HepG2 (cell line): ENCODE measurements at regions of chr15 and their contacts with region 1.

Region 1: GRCh38 chr15:60660290-60661051 is 181.5 kb upstream of the ICE2 start:
- DNase-seq: no peak
- ATAC-seq: no peak
- H3K4me3 ChIP-seq: no peak overlapping the region
- H3K27ac ChIP-seq: no peak overlapping the region
- H3K4me1 ChIP-seq: no peaks in the 10 kb centered on the region
- H3K27me3 ChIP-seq: peaks cover 0 to 9% of the 10 kb centered on the region in 2 experiments; a peak in 2 of 5 replicates
- CTCF ChIP-seq: no peak
- EP300 ChIP-seq: no peak
- POLR2A ChIP-seq: no peak
- RAD21 ChIP-seq: no peak

Region 2: DNA sequence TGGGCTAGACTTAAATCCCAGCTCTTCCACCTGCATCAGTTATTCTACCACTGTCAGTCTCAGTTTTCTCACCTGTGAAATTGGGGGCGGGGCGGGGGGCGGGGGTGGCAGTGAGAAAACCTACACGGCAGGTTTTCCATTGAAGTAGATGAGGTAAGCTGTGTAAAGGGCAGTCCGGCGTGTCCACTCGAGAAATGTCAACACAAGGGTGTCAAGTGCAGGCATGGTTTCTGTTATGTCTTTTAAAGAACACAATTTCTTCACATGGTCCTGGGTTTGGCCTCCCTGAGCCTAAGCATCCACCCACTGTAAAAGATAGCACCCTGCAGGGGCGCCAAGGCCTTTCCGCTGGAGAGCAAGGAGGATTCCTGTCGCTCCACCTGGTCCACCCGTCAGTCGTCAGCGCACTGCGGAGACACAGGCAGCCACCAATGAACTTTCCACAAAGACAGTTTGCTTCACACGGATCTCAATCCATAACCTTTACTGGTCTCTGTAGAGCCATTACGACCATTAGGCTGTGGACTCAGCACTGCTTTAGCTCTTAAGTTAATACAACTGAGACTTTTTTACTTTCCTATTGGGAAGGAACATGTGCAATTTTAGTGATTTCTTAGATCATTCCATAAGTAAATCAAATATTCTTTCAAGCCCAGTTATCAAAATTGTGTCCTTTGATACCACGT is 755.9 kb before region 1 on chr15:
- CTCF ChIA-PET with region 1: no interaction called
- POLR2A ChIA-PET with region 1: no interaction called
- in situ Hi-C with region 1: no loop called
- intact Hi-C with region 1: no loop called
- DNase-seq: no peak
- ATAC-seq: no peak
- H3K4me3 ChIP-seq: no peak overlapping the region
- H3K27ac ChIP-seq: no peak overlapping the region
- H3K4me1 ChIP-seq: no peaks in the 10 kb centered on the region
- H3K27me3 ChIP-seq: no peaks in the 10 kb centered on the region; a peak in 1 of 5 replicates
- CTCF ChIP-seq: no peak
- EP300 ChIP-seq: no peak
- POLR2A ChIP-seq: no peak
- RAD21 ChIP-seq: no peak

Region 3: GRCh38 chr15:60643555-60643954 is 16.9 kb before region 1 on chr15:
- CTCF ChIA-PET with region 1: no interaction called
- POLR2A ChIA-PET with region 1: no interaction called
- in situ Hi-C with region 1: no loop called
- intact Hi-C with region 1: no loop called
- DNase-seq: no peak
- ATAC-seq: no peak
- H3K4me3 ChIP-seq: no peak overlapping the region
- H3K27ac ChIP-seq: no peak overlapping the region
- H3K4me1 ChIP-seq: no peaks in the 10 kb centered on the region
- H3K27me3 ChIP-seq: peaks cover 0 to 23% of the 10 kb centered on the region in 2 experiments; a peak in 2 of 5 replicates
- CTCF ChIP-seq: no peak
- EP300 ChIP-seq: no peak
- POLR2A ChIP-seq: no peak
- RAD21 ChIP-seq: no peak

Region 4: GRCh38 chr15:60905587-60905986 is 245.1 kb after region 1 on chr15:
- CTCF ChIA-PET with region 1: no interaction called
- POLR2A ChIA-PET with region 1: no interaction called
- in situ Hi-C with region 1: no loop called
- intact Hi-C with region 1: loop called (anchors 1 kb)
- DNase-seq: no peak
- ATAC-seq: peak; percentile 59; the same call in 2 of the 3 replicates
- H3K4me3 ChIP-seq: no peak overlapping the region
- H3K27ac ChIP-seq: no peak overlapping the region
- H3K4me1 ChIP-seq: no peaks in the 10 kb centered on the region
- H3K27me3 ChIP-seq: peaks cover 0 to 9% of the 10 kb centered on the region in 2 experiments; a peak in 2 of 5 replicates
- CTCF ChIP-seq: peak; percentile 60
- EP300 ChIP-seq: no peak
- POLR2A ChIP-seq: no peak
- RAD21 ChIP-seq: no peak

Region 5: GRCh38 chr15:61299075-61299763 is 638.7 kb after region 1 on chr15:
- CTCF ChIA-PET with region 1: no interaction called
- POLR2A ChIA-PET with region 1: no interaction called
- in situ Hi-C with region 1: no loop called
- intact Hi-C with region 1: no loop called
- DNase-seq: no peak
- ATAC-seq: no peak
- H3K4me3 ChIP-seq: no peak overlapping the region
- H3K27ac ChIP-seq: no peak overlapping the region
- H3K4me1 ChIP-seq: no peaks in the 10 kb centered on the region
- H3K27me3 ChIP-seq: no peaks in the 10 kb centered on the region
- CTCF ChIP-seq: no peak
- EP300 ChIP-seq: no peak
- POLR2A ChIP-seq: no peak
- RAD21 ChIP-seq: no peak